HEK293 (cell line): ENCODE measurements at regions of chr3 and their contacts with region 1.

Region 1: GRCh38 chr3:37855363-37855970 is 6.2 kb upstream of the CTDSPL start:
- H3K4me3 ChIP-seq: no peak overlapping the region
- H3K27ac ChIP-seq: no peak overlapping the region
- H3K4me1 ChIP-seq: no peaks in the 10 kb centered on the region
- CTCF ChIP-seq: peak; percentile 74

Region 2: GRCh38 chr3:37897763-37898162 is 42.3 kb after region 1 on chr3:
- CTCF ChIA-PET with region 1: no interaction called
- POLR2A ChIA-PET with region 1: no interaction called
- H3K4me3 ChIP-seq: no peak overlapping the region
- H3K27ac ChIP-seq: no peak overlapping the region
- H3K4me1 ChIP-seq: peaks cover 4% of the 10 kb centered on the region; the same call in 1 of the 2 replicates
- CTCF ChIP-seq: no peak

Region 3: DNA sequence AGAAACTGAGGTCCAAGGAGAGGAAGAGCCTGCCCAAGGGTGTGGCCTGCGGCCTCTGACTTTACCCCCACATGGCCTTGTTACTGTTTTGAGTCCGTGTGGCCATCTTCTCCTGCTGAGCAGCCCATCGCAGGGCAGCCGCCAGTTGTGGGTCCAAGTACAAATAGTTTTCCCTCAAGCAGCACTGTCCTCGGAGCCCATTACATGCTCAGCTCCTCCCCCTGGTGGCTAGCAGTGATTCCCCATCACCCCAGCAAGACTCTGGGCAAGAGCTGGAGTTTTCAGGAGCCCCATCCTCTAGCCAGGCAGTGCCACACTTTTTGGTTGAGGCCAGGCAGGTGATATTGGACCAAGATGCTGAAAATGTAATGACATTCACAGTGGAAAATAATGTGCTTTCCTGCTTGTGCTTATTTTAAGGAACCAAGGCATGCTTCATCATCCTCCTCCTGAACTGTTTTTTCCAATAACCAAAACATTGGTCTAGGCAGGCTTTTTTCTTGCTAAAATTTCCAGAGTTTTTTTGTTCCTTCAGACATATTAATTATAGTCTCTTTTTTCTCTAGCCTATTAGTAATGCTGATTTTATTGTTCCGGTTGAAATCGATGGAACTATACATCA is 111.9 kb after region 1 on chr3:
- CTCF ChIA-PET with region 1: interaction called, 164 read pairs
- POLR2A ChIA-PET with region 1: no interaction called
- H3K4me3 ChIP-seq: no peak overlapping the region
- H3K27ac ChIP-seq: no peak overlapping the region
- H3K4me1 ChIP-seq: no peaks in the 10 kb centered on the region
- CTCF ChIP-seq: 0 out of 2 replicates have a peak, but pooled peaks have one; percentile 17

Region 4: GRCh38 chr3:38004415-38005076 is 149.1 kb after region 1 on chr3:
- CTCF ChIA-PET with region 1: interaction called, 20 read pairs
- POLR2A ChIA-PET with region 1: no interaction called
- H3K4me3 ChIP-seq: no peak overlapping the region
- H3K27ac ChIP-seq: no peak overlapping the region
- H3K4me1 ChIP-seq: no peaks in the 10 kb centered on the region
- CTCF ChIP-seq: peak; percentile 83